CD8-positive, alpha-beta T cell (primary cell): ENCODE measurements at regions of chr15 and their contacts with region 1.

Region 1: DNA sequence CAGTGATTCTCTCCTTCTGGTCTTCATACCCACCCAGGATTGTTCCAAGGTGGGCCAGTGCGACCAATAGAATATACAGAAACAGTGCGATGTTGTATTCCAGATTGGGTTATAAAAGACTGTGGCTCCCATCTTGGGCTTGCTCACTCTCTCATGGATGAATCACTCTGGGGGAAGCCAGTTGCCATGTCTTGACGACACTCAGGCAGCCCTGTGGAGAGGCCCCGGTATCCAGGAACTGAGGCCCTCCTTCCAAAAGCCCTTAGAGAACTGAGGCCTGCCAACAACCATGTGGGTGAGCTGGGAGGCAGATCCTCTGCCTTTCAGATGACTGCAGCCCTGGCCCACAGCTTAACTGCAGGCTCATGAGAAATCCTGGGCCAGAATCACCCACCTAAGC is 57.2 kb downstream of the SH3GL3 start:
- DNase-seq: no peak
- ATAC-seq: no peak
- H3K4me3 ChIP-seq: no peak overlapping the region
- H3K4me3 Mint-ChIP-seq: no peak overlapping the region
- H3K27ac ChIP-seq: no peak overlapping the region
- H3K27ac Mint-ChIP-seq: no peak overlapping the region
- H3K4me1 ChIP-seq: no peaks in the 10 kb centered on the region
- H3K4me1 Mint-ChIP-seq: no peaks in the 10 kb centered on the region
- H3K27me3 ChIP-seq: no peaks in the 10 kb centered on the region
- H3K27me3 Mint-ChIP-seq: no peaks in the 10 kb centered on the region
- CTCF ChIP-seq: no peak

Region 2: DNA sequence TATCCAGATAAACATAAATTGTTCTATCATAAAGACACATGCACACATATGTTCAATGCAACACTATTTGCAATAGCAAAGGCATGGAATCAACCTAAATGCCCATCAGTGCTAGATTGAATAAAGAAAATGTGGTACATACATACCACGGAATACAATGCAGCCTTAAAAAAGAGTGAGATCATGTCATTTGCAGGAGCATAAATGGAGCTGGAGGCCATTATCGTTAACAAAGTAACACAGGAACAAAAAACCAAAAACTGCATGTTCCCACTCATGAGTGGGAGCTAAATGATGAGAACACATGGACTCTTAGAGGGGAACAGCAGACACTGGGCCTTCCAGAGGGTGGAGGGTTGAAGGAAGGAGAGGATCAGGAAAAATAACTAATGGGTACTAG is 22.0 kb after region 1 on chr15:
- CTCF ChIA-PET with region 1: no interaction called
- POLR2A ChIA-PET with region 1: no interaction called
- intact Hi-C with region 1: loop called in 1 of 2 experiments (anchors 2 kb)
- DNase-seq: no peak
- ATAC-seq: no peak
- H3K4me3 ChIP-seq: no peak overlapping the region
- H3K4me3 Mint-ChIP-seq: no peak overlapping the region
- H3K27ac ChIP-seq: no peak overlapping the region
- H3K27ac Mint-ChIP-seq: no peak overlapping the region
- H3K4me1 ChIP-seq: no peaks in the 10 kb centered on the region
- H3K4me1 Mint-ChIP-seq: no peaks in the 10 kb centered on the region
- H3K27me3 ChIP-seq: no peaks in the 10 kb centered on the region
- H3K27me3 Mint-ChIP-seq: peaks cover 4% of the 10 kb centered on the region
- CTCF ChIP-seq: no peak

Region 3: DNA sequence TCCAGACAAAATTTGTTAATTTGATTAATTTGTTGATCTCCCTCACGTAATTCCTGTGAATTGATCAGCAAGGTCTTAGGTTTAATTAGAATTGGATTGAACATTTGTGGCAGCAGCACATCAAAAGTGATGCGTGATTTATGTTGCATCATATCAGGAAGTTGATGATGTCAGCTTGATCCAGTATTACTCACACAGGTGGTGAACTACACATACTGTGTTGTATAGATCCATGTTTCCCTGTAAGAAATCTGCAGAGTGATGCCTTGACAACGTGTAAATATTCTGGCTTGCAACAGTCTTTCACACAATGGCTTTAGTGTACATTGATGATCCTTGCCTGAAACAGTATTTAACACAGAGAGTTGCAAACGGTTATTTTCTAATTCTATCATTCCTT is 350.0 kb after region 1 on chr15:
- CTCF ChIA-PET with region 1: no interaction called
- POLR2A ChIA-PET with region 1: no interaction called
- intact Hi-C with region 1: no loop called
- DNase-seq: no peak
- ATAC-seq: no peak
- H3K4me3 ChIP-seq: no peak overlapping the region
- H3K4me3 Mint-ChIP-seq: no peak overlapping the region
- H3K27ac ChIP-seq: no peak overlapping the region
- H3K27ac Mint-ChIP-seq: no peak overlapping the region
- H3K4me1 ChIP-seq: no peaks in the 10 kb centered on the region
- H3K4me1 Mint-ChIP-seq: no peaks in the 10 kb centered on the region
- H3K27me3 ChIP-seq: peaks cover 0 to 2% of the 10 kb centered on the region in 2 experiments
- H3K27me3 Mint-ChIP-seq: peaks cover 16% of the 10 kb centered on the region
- CTCF ChIP-seq: no peak